ENCODE measurements at regions of chr10 and their contacts with region 1.

Region 1: DNA sequence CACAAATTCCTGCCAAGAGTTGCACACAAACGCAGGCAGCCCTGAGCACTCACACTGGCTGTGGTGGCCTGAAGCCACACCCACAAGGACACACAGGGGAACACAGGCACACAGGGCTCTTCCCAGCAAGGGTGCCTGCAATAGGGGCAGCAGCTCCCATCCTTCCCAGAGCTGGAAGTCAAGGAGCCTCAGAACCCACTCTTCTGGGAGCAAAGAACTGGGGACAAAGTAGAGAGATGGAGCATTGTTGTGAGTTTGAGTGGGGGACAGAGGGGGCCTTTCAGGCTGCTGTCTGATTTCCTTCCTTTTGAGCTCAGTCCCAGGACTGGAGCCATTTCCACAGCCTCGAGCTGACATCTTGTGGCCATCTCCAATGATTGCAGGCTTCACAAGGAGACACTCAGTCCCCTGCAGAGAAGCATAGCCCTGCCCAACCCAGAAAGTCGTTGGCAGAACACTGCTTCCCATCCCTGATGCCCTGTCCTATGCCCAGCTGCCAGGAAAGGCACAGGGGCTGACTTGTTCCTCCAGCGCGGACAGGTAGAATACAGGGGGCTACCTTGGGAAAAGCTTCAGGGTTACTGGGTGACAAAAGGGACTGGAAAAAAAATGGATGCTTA is 34.4 kb upstream of the SLF2 start:
- DNase-seq: peak; percentile 84
- H3K4me3 ChIP-seq: no peak overlapping the region
- H3K27ac ChIP-seq: no peak overlapping the region
- H3K4me1 ChIP-seq: peaks cover 6% of the 10 kb centered on the region
- H3K27me3 ChIP-seq: peaks cover 3% of the 10 kb centered on the region
- CTCF ChIP-seq: peak; percentile 81

Region 2: GRCh38 chr10:100433253-100434240 is 444.9 kb before region 1 on chr10:
- CTCF ChIA-PET with region 1: interaction called, 3 read pairs
- POLR2A ChIA-PET with region 1: no interaction called
- intact Hi-C with region 1: loop called (anchors 10 kb)
- DNase-seq: peak; percentile 96
- H3K4me3 ChIP-seq: no peak overlapping the region
- H3K27ac ChIP-seq: no peak overlapping the region
- H3K4me1 ChIP-seq: no peaks in the 10 kb centered on the region
- H3K27me3 ChIP-seq: no peaks in the 10 kb centered on the region
- CTCF ChIP-seq: peak; percentile 100

Region 3: GRCh38 chr10:100518761-100519241 is 359.6 kb before region 1 on chr10:
- CTCF ChIA-PET with region 1: interaction called, 15 read pairs
- POLR2A ChIA-PET with region 1: no interaction called
- intact Hi-C with region 1: no loop called
- DNase-seq: peak; percentile 81
- H3K4me3 ChIP-seq: peak overlapping the region; percentile 50
- H3K27ac ChIP-seq: no peak overlapping the region
- H3K4me1 ChIP-seq: peaks cover 7% of the 10 kb centered on the region
- H3K27me3 ChIP-seq: no peaks in the 10 kb centered on the region
- CTCF ChIP-seq: peak; percentile 85

Region 4: DNA sequence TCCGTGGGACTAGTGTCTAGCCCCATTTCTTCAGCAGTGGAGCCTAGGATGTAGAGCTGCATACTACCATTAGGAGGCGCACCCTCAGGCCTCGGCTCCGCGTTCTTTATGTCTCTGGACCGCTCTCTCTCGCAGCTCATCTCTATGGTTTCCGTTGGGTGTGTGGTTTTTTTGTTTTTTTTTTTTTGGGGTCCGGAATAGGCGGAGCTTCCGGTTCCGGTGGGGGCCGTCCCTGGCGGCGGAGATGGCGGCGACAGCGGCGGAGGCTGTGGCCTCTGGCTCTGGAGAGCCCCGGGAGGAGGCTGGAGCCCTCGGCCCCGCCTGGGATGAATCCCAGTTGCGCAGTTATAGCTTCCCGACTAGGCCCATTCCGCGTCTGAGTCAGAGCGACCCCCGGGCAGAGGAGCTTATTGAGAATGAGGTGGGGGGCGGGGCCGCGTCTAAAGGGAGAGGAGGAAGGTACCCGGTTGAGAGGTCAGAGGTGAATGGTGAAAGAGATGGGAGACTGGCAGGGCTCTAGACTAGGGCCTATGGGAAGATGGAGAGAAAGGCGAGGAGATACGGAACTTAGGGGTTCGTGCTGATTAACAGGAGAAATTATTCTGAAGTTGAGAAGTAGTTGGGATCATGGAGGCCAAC is 342.6 kb before region 1 on chr10 and contains the start of gene HIF1AN:
- CTCF ChIA-PET with region 1: interaction called, 11 read pairs
- POLR2A ChIA-PET with region 1: no interaction called
- intact Hi-C with region 1: no loop called
- DNase-seq: peak; percentile 98
- H3K4me3 ChIP-seq: peak within 1 kb of the TSS; percentile 89
- H3K27ac ChIP-seq: peak within 1 kb of the TSS; percentile 49
- H3K4me1 ChIP-seq: peaks cover 13% of the 10 kb centered on the region
- H3K27me3 ChIP-seq: no peaks in the 10 kb centered on the region
- CTCF ChIP-seq: peak; percentile 99
- total RNA-seq, gene HIF1AN: 49.0 and 57.6 TPM in 2 replicates

Region 5: DNA sequence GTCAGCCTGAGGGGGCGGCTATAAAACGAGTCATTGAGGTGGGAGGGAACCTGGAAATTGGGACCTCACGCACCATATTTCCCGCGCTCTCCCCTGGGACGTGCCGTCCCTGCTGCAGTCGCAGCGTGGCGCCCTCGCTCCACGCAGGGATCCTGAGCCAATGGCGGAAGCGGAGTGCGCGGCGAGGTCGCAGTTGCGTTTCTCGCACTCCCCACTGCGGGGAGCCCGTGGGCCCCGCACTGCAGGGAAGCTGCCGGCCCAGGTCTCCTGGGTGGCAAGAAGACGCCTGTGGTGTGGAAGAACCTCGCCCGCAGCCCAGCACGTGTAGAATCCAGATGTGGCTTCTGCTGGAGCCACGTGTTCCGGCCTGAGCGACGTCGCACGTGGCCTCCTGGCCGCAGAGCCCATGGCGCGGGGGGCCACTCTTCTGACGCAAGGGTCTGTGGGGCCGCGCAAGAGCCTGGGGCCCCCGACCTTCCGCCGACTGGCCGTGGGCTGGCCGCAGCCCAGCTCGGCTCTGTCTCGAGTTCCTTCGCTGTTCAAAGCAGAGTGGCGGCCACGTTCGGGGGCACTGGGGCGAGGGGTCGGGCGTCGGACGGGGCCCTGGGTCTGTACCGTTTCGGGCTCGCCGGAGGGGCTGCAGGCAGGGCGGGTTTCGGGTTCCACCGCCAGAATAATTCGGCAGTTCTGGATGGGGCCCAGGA is 316.2 kb before region 1 on chr10:
- CTCF ChIA-PET with region 1: interaction called, 30 read pairs
- POLR2A ChIA-PET with region 1: no interaction called
- intact Hi-C with region 1: loop called (anchors 2 kb)
- DNase-seq: peak; percentile 89
- H3K4me3 ChIP-seq: peak overlapping the region; percentile 15
- H3K27ac ChIP-seq: no peak overlapping the region
- H3K4me1 ChIP-seq: peaks cover 10% of the 10 kb centered on the region
- H3K27me3 ChIP-seq: peaks cover 15% of the 10 kb centered on the region
- CTCF ChIP-seq: peak; percentile 99

Region 6: DNA sequence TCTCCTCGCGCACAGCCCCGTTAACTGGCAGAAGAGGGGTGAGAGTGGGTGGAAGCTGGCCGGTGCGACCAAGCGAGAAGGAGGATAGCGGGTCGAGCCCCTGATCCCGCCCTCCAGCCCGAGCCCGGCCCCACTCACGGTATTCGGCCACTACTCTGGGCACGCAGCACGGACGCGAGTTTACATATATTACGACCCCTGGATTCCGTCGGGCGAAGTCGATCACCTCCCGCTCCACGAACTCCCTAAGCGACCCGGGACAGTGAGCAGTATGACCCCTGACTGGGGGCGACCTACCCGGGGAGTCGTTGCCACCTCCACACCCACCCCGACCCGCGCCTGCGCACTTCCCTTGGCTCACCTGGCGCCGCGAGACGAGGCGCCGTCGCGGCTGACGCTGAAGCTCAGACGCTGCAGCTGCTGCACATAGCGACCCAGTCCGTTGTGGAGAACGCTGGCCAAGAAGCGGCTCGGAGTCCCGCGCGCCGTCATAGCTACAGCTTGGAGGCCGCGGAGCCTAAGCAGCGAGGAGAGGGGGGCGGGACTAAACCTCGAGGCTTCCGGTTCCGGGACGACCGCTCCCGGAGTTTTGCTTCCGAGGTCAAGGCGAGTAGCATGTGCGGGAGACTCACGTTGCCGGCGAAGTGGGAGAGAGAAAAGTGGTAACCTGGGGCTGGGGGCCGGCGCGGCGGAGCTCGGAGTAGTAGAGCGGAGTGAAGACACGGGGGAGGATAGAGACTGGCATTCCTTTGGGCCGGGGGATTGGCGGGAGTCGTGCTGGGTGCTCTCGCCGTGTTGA is 108.8 kb after region 1 on chr10 and contains the starts of genes MRPL43 and TWNK:
- CTCF ChIA-PET with region 1: no interaction called
- POLR2A ChIA-PET with region 1: no interaction called
- intact Hi-C with region 1: no loop called
- DNase-seq: peak; percentile 90
- H3K4me3 ChIP-seq: peak within 1 kb of the TSS; percentile 93
- H3K27ac ChIP-seq: peak within 1 kb of the TSS; percentile 83
- H3K4me1 ChIP-seq: peaks cover 24% of the 10 kb centered on the region
- H3K27me3 ChIP-seq: no peaks in the 10 kb centered on the region
- CTCF ChIP-seq: no peak
- total RNA-seq, gene MRPL43: 80.4 and 88.8 TPM in 2 replicates
- total RNA-seq, gene TWNK: 29.5 and 30.8 TPM in 2 replicates

Region 7: DNA sequence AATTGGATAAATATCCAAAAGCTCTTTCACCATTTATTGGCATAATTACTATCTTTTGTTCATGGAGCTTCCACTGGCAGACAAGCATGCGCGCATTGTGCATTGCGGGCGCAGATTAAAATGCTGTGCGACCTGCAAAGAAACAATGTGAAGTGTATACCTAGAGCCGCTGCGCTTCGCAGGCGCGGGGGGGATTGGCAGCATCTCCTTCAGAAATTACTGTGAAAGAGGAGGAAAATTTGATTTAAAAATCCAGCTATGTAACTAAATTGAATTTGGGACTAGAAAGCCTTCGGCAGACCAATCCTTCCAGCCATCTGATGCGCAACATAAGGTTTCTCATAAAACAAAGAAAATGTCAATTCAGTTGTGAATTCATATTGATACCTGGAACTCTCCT is 915.1 kb after region 1 on chr10:
- CTCF ChIA-PET with region 1: no interaction called
- POLR2A ChIA-PET with region 1: no interaction called
- intact Hi-C with region 1: no loop called
- DNase-seq: no peak
- H3K4me3 ChIP-seq: no peak overlapping the region
- H3K27ac ChIP-seq: no peak overlapping the region
- H3K4me1 ChIP-seq: no peaks in the 10 kb centered on the region
- H3K27me3 ChIP-seq: no peaks in the 10 kb centered on the region
- CTCF ChIP-seq: no peak